Left ventricle myocardium inferior (tissue), 1 donor: ENCODE measurements at regions of chr1 and their contacts with region 1.

Region 1: GRCh38 chr1:152189657-152190442 is 30.8 kb upstream of the RPTN start:
- DNase-seq: peak; percentile 50
- H3K4me3 ChIP-seq: peak overlapping the region; percentile 73
- H3K27ac ChIP-seq: peak overlapping the region; percentile 72
- H3K4me1 ChIP-seq: peaks cover 13% of the 10 kb centered on the region
- H3K27me3 ChIP-seq: peaks cover 4% of the 10 kb centered on the region
- CTCF ChIP-seq: peak; percentile 78

Region 2: GRCh38 chr1:152440635-152441471 is 251.0 kb after region 1 on chr1:
- intact Hi-C with region 1: loop called (anchors 5 kb)
- DNase-seq: peak; percentile 50
- H3K4me3 ChIP-seq: no peak overlapping the region
- H3K27ac ChIP-seq: no peak overlapping the region
- H3K4me1 ChIP-seq: peaks cover 26% of the 10 kb centered on the region
- H3K27me3 ChIP-seq: peaks cover 34% of the 10 kb centered on the region
- CTCF ChIP-seq: peak; percentile 87

Region 3: GRCh38 chr1:152459596-152460528 is 270.0 kb after region 1 on chr1:
- intact Hi-C with region 1: loop called (anchors 5 kb)
- DNase-seq: peak; percentile 71
- H3K4me3 ChIP-seq: peak overlapping the region; percentile 14
- H3K27ac ChIP-seq: peak overlapping the region; percentile 28
- H3K4me1 ChIP-seq: peaks cover 6% of the 10 kb centered on the region
- H3K27me3 ChIP-seq: peaks cover 12% of the 10 kb centered on the region
- CTCF ChIP-seq: peak; percentile 85

Region 4: DNA sequence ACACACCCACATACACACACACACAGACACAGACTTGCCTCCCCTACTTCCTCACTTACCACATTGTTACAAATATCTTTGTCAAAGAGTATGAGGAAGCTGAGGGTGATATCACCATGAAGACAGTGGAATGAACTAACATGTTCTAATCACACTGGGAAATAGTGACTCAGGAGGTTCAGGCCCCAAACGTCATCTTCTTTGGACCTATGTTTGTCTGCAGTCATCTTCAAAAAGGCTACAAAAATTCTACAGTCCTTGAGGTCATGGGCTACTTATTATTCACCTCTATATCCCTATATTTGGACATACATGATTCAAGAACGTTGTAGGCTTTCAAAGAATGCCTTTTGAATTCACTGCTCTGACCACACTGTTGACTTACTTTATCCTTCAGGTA is 483.2 kb after region 1 on chr1:
- intact Hi-C with region 1: no loop called
- DNase-seq: no peak
- H3K4me3 ChIP-seq: no peak overlapping the region
- H3K27ac ChIP-seq: no peak overlapping the region
- H3K4me1 ChIP-seq: no peaks in the 10 kb centered on the region
- H3K27me3 ChIP-seq: no peaks in the 10 kb centered on the region
- CTCF ChIP-seq: no peak